Mucosa of descending colon (tissue), 3 donors: ENCODE measurements at regions of chr2 and their contacts with region 1.

Region 1: GRCh38 chr2:174771631-174772471 is 7.6 kb upstream of the CHRNA1 start:
- DNase-seq: peak in 2 of 3 donors; percentile 73 to 81
- ATAC-seq: peak; percentile 85
- H3K4me3 ChIP-seq: no peak overlapping the region
- H3K4me1 ChIP-seq: no peaks in the 10 kb centered on the region
- CTCF ChIP-seq: peak; percentile 53

Region 2: GRCh38 chr2:174901075-174901474 is 129.2 kb after region 1 on chr2:
- intact Hi-C with region 1: no loop called
- DNase-seq: no peak
- ATAC-seq: no peak
- H3K4me3 ChIP-seq: no peak overlapping the region
- H3K4me1 ChIP-seq: no peaks in the 10 kb centered on the region
- CTCF ChIP-seq: no peak

Region 3: DNA sequence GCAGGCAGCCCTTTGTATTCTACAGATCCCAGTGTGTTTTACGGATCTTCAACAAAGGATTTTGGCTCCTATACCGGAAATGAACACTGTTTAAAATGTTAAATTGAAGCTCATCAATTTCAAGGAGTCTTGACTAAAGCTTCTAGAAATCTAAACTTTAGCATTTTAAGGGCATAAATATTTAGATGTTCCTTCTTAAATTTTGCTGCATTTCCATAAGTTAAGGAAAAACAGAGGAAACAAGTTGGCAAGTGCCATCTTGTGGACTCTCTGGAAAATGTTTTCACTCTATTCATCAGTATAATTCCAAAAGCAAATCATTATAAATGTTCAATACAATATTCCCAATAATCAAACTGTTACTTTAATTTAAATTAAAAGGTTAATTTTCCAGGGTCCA is 213.8 kb after region 1 on chr2:
- intact Hi-C with region 1: loop called in 1 of 2 experiments (anchors 10 kb)
- DNase-seq: no peak
- ATAC-seq: no peak
- H3K4me3 ChIP-seq: no peak overlapping the region
- H3K4me1 ChIP-seq: no peaks in the 10 kb centered on the region
- CTCF ChIP-seq: no peak

Region 4: DNA sequence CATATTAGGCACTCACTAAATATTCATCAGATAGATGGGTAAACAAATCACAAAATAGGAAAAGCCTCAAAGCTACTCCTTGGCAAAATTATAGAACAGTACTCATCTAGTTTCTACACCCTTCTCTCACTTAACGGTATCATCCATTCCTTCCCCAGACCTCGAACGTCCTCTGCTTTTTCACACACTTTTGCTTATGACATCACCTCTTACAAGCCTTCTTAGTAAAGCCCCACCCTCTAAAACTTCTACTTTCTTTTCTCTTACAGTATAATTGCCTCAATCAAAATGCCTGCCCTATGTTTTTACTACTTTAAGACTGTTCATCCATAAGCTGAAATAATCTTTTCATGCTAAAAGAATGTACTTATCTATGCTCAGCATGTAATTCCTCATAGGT is 225.3 kb after region 1 on chr2:
- intact Hi-C with region 1: loop called in 1 of 2 experiments (anchors 5 kb)
- DNase-seq: no peak
- ATAC-seq: no peak
- H3K4me3 ChIP-seq: no peak overlapping the region
- H3K4me1 ChIP-seq: no peaks in the 10 kb centered on the region
- CTCF ChIP-seq: no peak